Mammary epithelial cell (primary cell): ENCODE measurements at regions of chr17 and their contacts with region 1.

Region 1: GRCh38 chr17:5730373-5730772 is 146.1 kb upstream of the NLRP1 start:
- DNase-seq: no peak
- H3K4me3 ChIP-seq: no peak overlapping the region
- H3K27ac ChIP-seq: no peak overlapping the region
- H3K4me1 ChIP-seq: no peaks in the 10 kb centered on the region
- H3K27me3 ChIP-seq: peaks cover 2% of the 10 kb centered on the region
- CTCF ChIP-seq: no peak

Region 2: GRCh38 chr17:5661491-5662125 is 68.8 kb before region 1 on chr17:
- CTCF ChIA-PET with region 1: no interaction called
- dilution Hi-C with region 1: loop called (anchors 5 kb)
- in situ Hi-C with region 1: no loop called
- intact Hi-C with region 1: no loop called
- DNase-seq: no peak
- H3K4me3 ChIP-seq: no peak overlapping the region
- H3K27ac ChIP-seq: no peak overlapping the region
- H3K4me1 ChIP-seq: no peaks in the 10 kb centered on the region
- H3K27me3 ChIP-seq: no peaks in the 10 kb centered on the region
- CTCF ChIP-seq: no peak